B cell (primary cell): ENCODE measurements at regions of chr10 and their contacts with region 1.

Region 1: DNA sequence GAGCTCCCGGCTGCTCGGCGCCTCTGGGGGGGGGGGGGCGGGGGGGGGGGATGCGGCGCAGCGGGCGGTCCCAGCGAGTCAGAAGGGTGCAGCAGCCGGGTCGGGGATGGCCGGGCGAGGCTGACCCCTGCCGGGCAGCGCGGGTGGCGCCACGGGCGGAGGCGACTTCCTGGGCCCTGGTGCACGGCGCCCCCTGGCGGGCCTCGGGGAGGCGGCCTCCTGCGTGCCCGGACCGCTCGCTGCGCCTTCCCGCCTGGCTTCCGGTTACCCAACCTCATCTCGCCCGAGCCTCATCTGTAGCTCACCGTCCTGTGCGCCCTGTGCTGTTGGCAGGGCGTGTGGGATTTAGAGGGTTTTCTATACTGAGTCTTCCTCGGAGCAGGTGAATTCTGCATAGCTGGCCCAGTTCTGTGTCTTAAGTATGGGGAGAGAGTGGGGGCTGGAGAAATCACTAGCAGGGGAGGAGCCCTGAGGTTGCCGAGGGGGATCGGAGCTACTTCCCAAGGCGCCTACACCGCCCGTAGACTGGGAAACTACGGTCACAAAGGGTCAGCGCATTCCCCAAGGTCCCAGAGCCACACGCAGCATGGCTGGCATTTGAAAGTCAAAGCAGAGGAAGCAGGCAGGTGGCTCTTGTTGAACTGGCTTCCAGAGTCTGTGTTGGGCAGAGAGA is 28.3 kb upstream of the WDFY4 start:
- DNase-seq: peak; percentile 96
- ATAC-seq: peak; percentile 94
- H3K4me3 ChIP-seq: peak overlapping the region; percentile 33 to 59 (median 53)
- H3K4me3 Mint-ChIP-seq: peak overlapping the region; percentile 86
- H3K27ac ChIP-seq: no peak overlapping the region
- H3K27ac Mint-ChIP-seq: peak overlapping the region; percentile 72
- H3K4me1 ChIP-seq: peaks cover 45 to 47% of the 10 kb centered on the region in 2 donors
- H3K4me1 Mint-ChIP-seq: peaks cover 52% of the 10 kb centered on the region
- H3K27me3 ChIP-seq: peaks cover 0 to 16% (median 8%) of the 10 kb centered on the region in 4 experiments
- H3K27me3 Mint-ChIP-seq: peaks cover 4% of the 10 kb centered on the region
- CTCF ChIP-seq: peak; percentile 99

Region 2: GRCh38 chr10:48480397-48481374 is 175.7 kb before region 1 on chr10:
- CTCF ChIA-PET with region 1: no interaction called
- POLR2A ChIA-PET with region 1: no interaction called
- intact Hi-C with region 1: no loop called
- DNase-seq: no peak
- ATAC-seq: no peak
- H3K4me3 ChIP-seq: no peak overlapping the region
- H3K4me3 Mint-ChIP-seq: no peak overlapping the region
- H3K27ac ChIP-seq: no peak overlapping the region
- H3K27ac Mint-ChIP-seq: no peak overlapping the region
- H3K4me1 ChIP-seq: no peaks in the 10 kb centered on the region
- H3K4me1 Mint-ChIP-seq: no peaks in the 10 kb centered on the region
- H3K27me3 ChIP-seq: peaks cover 0 to 5% (median 0%) of the 10 kb centered on the region in 4 experiments
- H3K27me3 Mint-ChIP-seq: peaks cover 38% of the 10 kb centered on the region
- CTCF ChIP-seq: no peak

Region 3: GRCh38 chr10:48564466-48565160 is 91.8 kb before region 1 on chr10:
- CTCF ChIA-PET with region 1: interaction called, 33 read pairs
- POLR2A ChIA-PET with region 1: no interaction called
- intact Hi-C with region 1: no loop called
- DNase-seq: no peak
- ATAC-seq: no peak
- H3K4me3 ChIP-seq: no peak overlapping the region
- H3K4me3 Mint-ChIP-seq: no peak overlapping the region
- H3K27ac ChIP-seq: no peak overlapping the region
- H3K27ac Mint-ChIP-seq: no peak overlapping the region
- H3K4me1 ChIP-seq: no peaks in the 10 kb centered on the region
- H3K4me1 Mint-ChIP-seq: peaks cover 9% of the 10 kb centered on the region
- H3K27me3 ChIP-seq: no peaks in the 10 kb centered on the region
- H3K27me3 Mint-ChIP-seq: peaks cover 3% of the 10 kb centered on the region
- CTCF ChIP-seq: no peak

Region 4: GRCh38 chr10:48623607-48624132 is 32.7 kb before region 1 on chr10:
- CTCF ChIA-PET with region 1: interaction called, 58 read pairs
- POLR2A ChIA-PET with region 1: interaction called, 3 read pairs
- intact Hi-C with region 1: no loop called
- DNase-seq: no peak
- ATAC-seq: no peak
- H3K4me3 ChIP-seq: no peak overlapping the region
- H3K4me3 Mint-ChIP-seq: peak overlapping the region; percentile 45
- H3K27ac ChIP-seq: no peak overlapping the region
- H3K27ac Mint-ChIP-seq: peak overlapping the region; percentile 35
- H3K4me1 ChIP-seq: peaks cover 32% of the 10 kb centered on the region in 2 donors
- H3K4me1 Mint-ChIP-seq: peaks cover 35% of the 10 kb centered on the region
- H3K27me3 ChIP-seq: peaks cover 0 to 20% (median 0%) of the 10 kb centered on the region in 4 experiments
- H3K27me3 Mint-ChIP-seq: peaks cover 14% of the 10 kb centered on the region
- CTCF ChIP-seq: no peak

Region 5: GRCh38 chr10:48701139-48701901 is 44.9 kb after region 1 on chr10:
- CTCF ChIA-PET with region 1: interaction called, 521 read pairs
- POLR2A ChIA-PET with region 1: interaction called, 8 read pairs
- intact Hi-C with region 1: loop called (anchors 1 kb)
- DNase-seq: peak; percentile 62
- ATAC-seq: peak; percentile 37
- H3K4me3 ChIP-seq: no peak overlapping the region
- H3K4me3 Mint-ChIP-seq: peak overlapping the region; percentile 58
- H3K27ac ChIP-seq: peak overlapping the region in 1 of 2 donors; percentile 66
- H3K27ac Mint-ChIP-seq: peak overlapping the region; percentile 88
- H3K4me1 ChIP-seq: peaks cover 87 to 98% of the 10 kb centered on the region in 2 donors
- H3K4me1 Mint-ChIP-seq: peaks cover 96% of the 10 kb centered on the region
- H3K27me3 ChIP-seq: no peaks in the 10 kb centered on the region
- H3K27me3 Mint-ChIP-seq: no peaks in the 10 kb centered on the region
- CTCF ChIP-seq: peak; percentile 70

Region 6: GRCh38 chr10:48751730-48752129 is 95.4 kb after region 1 on chr10:
- CTCF ChIA-PET with region 1: interaction called, 23 read pairs
- POLR2A ChIA-PET with region 1: interaction called, 4 read pairs
- intact Hi-C with region 1: loop called (anchors 5 kb)
- DNase-seq: no peak
- ATAC-seq: no peak
- H3K4me3 ChIP-seq: no peak overlapping the region
- H3K4me3 Mint-ChIP-seq: no peak overlapping the region
- H3K27ac ChIP-seq: no peak overlapping the region
- H3K27ac Mint-ChIP-seq: peak overlapping the region; percentile 38
- H3K4me1 ChIP-seq: peaks cover 14 to 15% of the 10 kb centered on the region in 2 donors
- H3K4me1 Mint-ChIP-seq: peaks cover 77% of the 10 kb centered on the region
- H3K27me3 ChIP-seq: no peaks in the 10 kb centered on the region
- H3K27me3 Mint-ChIP-seq: no peaks in the 10 kb centered on the region
- CTCF ChIP-seq: no peak

Region 7: GRCh38 chr10:48940958-48941357 is 284.6 kb after region 1 on chr10:
- CTCF ChIA-PET with region 1: no interaction called
- POLR2A ChIA-PET with region 1: no interaction called
- intact Hi-C with region 1: no loop called
- DNase-seq: no peak
- ATAC-seq: no peak
- H3K4me3 ChIP-seq: no peak overlapping the region
- H3K4me3 Mint-ChIP-seq: no peak overlapping the region
- H3K27ac ChIP-seq: no peak overlapping the region
- H3K27ac Mint-ChIP-seq: no peak overlapping the region
- H3K4me1 ChIP-seq: no peaks in the 10 kb centered on the region
- H3K4me1 Mint-ChIP-seq: no peaks in the 10 kb centered on the region
- H3K27me3 ChIP-seq: no peaks in the 10 kb centered on the region
- H3K27me3 Mint-ChIP-seq: no peaks in the 10 kb centered on the region
- CTCF ChIP-seq: no peak

Region 8: GRCh38 chr10:49512121-49512809 is 855.9 kb after region 1 on chr10:
- CTCF ChIA-PET with region 1: interaction called, 12 read pairs
- POLR2A ChIA-PET with region 1: no interaction called
- intact Hi-C with region 1: no loop called
- DNase-seq: peak; percentile 40
- ATAC-seq: no peak
- H3K4me3 ChIP-seq: no peak overlapping the region
- H3K4me3 Mint-ChIP-seq: no peak overlapping the region
- H3K27ac ChIP-seq: no peak overlapping the region
- H3K27ac Mint-ChIP-seq: no peak overlapping the region
- H3K4me1 ChIP-seq: peaks cover 11 to 13% of the 10 kb centered on the region in 2 donors
- H3K4me1 Mint-ChIP-seq: peaks cover 15% of the 10 kb centered on the region
- H3K27me3 ChIP-seq: no peaks in the 10 kb centered on the region
- H3K27me3 Mint-ChIP-seq: no peaks in the 10 kb centered on the region
- CTCF ChIP-seq: peak; percentile 78